Heart right ventricle (tissue), 16 donors: ENCODE measurements at regions of chr6 and their contacts with region 1.

Region 1: GRCh38 chr6:36685936-36686667 is 7.6 kb downstream of the CDKN1A start:
- DNase-seq: peak; percentile 25 to 52
- ATAC-seq: peak in 2 of 8 donors; percentile 21 to 34
- H3K4me3 ChIP-seq: no peak overlapping the region
- H3K27ac ChIP-seq: peak overlapping the region in 2 of 10 donors; percentile 13 to 46
- H3K4me1 ChIP-seq: peaks cover 6 to 51% (median 35%) of the 10 kb centered on the region in 9 donors
- H3K27me3 ChIP-seq: no peaks in the 10 kb centered on the region
- CTCF ChIP-seq: no peak

Region 2: DNA sequence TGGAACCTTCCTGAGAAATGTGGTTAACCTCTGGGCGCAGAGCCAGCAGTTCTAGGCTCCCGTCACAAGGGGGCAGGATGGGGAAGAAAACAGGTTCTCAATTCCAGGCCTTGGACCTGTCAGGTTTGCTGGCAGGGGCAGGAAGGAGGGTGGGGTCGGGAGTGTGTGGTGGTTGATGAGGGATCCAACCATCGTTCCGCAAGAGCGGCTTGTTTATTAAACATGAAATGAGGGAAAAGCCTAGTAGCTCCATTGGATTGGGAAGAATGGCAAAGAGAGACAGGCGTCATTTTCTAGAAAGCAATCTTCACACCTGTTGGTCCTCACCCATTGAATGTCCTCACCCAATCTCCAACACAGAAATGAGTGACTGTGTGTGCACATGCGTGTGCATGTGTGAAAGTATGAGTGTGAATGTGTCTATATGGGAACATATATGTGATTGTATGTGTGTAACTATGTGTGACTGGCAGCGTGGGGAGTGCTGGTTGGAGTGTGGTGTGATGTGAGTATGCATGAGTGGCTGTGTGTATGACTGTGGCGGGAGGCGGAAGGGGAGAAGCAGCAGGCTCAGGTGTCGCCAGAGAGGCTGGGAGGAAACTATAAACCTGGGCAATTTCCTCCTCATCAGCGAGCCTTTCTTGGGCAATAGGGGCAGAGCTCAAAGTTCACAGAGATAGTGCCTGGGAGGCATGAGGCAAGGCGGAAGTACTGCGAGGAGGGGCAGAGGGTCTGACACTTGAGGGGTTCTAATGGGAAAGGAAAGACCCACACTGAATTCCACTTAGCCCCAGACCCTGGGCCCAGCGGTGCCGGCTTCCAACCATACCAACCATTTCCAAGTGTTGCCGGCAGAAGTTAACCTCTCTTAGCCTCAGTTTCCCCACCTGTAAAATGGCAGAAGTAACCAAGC is 62.3 kb before region 1 on chr6:
- intact Hi-C with region 1: loop called in 6 of 10 experiments (anchors 2 to 5 kb)
- DNase-seq: peak; percentile 82 to 91
- ATAC-seq: peak; percentile 63 to 75 (median 70)
- H3K4me3 ChIP-seq: no peak overlapping the region
- H3K27ac ChIP-seq: peak overlapping the region in 1 of 10 donors; percentile 29
- H3K4me1 ChIP-seq: peaks cover 0 to 71% (median 52%) of the 10 kb centered on the region in 9 donors
- H3K27me3 ChIP-seq: no peaks in the 10 kb centered on the region
- CTCF ChIP-seq: peak; percentile 66 to 93 (median 87)